ENCODE measurements at regions of chr1 and their contacts with region 1.

Region 1: GRCh38 chr1:33111970-33112369 is 31.0 kb downstream of the AZIN2 start:
- DNase-seq: peak; percentile 39
- ATAC-seq: no peak
- H3K4me3 ChIP-seq: no peak overlapping the region
- H3K4me3 Mint-ChIP-seq: no peak overlapping the region
- H3K27ac ChIP-seq: no peak overlapping the region
- H3K27ac Mint-ChIP-seq: no peak overlapping the region
- H3K4me1 ChIP-seq: no peaks in the 10 kb centered on the region
- H3K4me1 Mint-ChIP-seq: no peaks in the 10 kb centered on the region
- H3K27me3 ChIP-seq: no peaks in the 10 kb centered on the region
- H3K27me3 Mint-ChIP-seq: peaks cover 19% of the 10 kb centered on the region
- CTCF ChIP-seq: no peak

Region 2: DNA sequence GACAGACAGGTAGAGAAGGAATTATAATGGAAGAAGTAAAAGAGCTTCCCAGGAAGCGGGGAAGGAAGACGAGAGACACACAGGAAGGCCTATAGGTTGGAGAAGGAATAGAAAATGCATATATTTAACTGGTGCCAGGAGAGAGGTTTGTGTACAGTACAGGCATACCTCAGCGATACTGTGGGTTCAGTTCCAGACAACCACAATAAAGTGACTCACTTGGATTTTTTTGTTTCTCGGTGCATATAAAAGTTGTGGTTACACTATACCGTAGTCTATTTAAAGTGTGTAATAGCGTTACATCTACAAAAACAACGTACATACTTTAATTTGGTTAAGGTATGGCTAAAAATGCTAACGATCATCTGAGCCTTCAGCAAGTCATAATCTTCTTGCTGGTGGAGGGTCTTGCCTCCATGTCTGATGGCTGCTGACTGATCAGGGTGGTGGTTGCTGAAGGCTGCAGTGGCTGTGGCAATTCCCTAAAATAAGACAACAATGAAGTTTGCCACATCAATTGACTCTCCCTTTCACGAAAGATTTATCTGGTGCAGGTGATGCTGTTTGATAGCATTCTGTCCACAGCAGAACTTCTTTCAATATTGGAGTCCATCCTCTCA is 310.8 kb before region 1 on chr1:
- CTCF ChIA-PET with region 1: no interaction called
- POLR2A ChIA-PET with region 1: no interaction called
- intact Hi-C with region 1: no loop called
- DNase-seq: no peak
- ATAC-seq: no peak
- H3K4me3 ChIP-seq: no peak overlapping the region
- H3K4me3 Mint-ChIP-seq: peak overlapping the region; percentile 2
- H3K27ac ChIP-seq: no peak overlapping the region
- H3K27ac Mint-ChIP-seq: peak overlapping the region; percentile 46
- H3K4me1 ChIP-seq: peaks cover 16 to 31% of the 10 kb centered on the region in 2 donors
- H3K4me1 Mint-ChIP-seq: peaks cover 34% of the 10 kb centered on the region
- H3K27me3 ChIP-seq: no peaks in the 10 kb centered on the region
- H3K27me3 Mint-ChIP-seq: no peaks in the 10 kb centered on the region
- CTCF ChIP-seq: no peak

Region 3: DNA sequence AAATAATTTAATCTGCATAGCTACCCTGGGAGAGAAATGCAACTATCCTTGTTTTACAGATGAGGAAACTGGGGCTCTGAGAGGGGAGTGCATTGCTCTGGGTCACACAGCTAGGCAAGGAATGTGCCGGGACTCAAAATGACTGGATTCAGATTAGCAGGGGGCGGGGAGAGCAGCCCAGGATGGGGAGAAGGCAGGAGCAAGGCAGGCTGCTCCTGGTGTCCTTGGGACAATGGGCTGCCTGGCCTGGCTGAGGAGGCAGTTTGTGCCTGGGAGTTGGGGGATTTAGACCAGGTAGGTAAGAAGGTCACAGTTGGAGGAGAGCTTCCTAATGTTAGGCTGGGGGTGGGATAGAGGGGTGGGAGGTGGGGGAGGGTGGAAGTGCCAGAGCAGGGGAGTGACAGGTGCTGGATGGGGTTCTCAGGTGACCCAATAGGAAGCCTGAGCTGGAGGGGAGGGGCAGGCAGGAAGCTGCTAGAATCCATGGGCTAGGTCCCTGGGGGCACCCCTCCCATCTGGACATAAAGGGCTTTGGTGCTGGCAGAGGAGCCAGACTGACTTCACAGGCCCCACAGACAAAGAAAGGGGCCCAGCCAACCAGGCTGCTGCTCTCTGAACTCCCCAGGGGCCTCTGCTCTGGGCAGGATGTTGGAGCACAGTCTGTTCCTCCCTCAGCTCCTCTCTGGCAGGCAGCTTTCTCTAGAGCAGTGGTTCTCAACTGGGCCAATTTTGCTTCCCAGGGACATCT is 40.9 kb after region 1 on chr1:
- CTCF ChIA-PET with region 1: no interaction called
- POLR2A ChIA-PET with region 1: no interaction called
- intact Hi-C with region 1: no loop called
- DNase-seq: no peak
- ATAC-seq: no peak
- H3K4me3 ChIP-seq: no peak overlapping the region
- H3K4me3 Mint-ChIP-seq: no peak overlapping the region
- H3K27ac ChIP-seq: no peak overlapping the region
- H3K27ac Mint-ChIP-seq: no peak overlapping the region
- H3K4me1 ChIP-seq: peaks cover 0 to 12% of the 10 kb centered on the region in 2 donors
- H3K4me1 Mint-ChIP-seq: peaks cover 7% of the 10 kb centered on the region
- H3K27me3 ChIP-seq: no peaks in the 10 kb centered on the region
- H3K27me3 Mint-ChIP-seq: no peaks in the 10 kb centered on the region
- CTCF ChIP-seq: no peak

Region 4: DNA sequence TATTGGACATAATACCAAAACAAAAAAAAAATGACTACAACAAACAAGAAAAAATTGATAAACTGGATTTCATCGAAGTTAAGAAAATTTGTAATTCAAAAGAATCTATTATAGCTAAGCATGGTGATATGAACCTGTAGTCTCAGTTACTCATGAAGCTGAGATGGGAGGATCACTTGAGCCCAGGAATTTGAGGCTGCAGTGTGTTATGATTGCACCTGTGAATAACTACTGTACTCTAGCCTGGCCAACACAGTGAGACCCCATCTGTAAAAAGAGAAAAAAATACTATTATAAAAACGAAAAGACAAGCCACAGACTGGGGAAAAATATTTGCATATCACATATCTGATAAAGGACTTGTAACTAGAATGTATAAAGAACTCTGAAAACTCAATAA is 94.4 kb after region 1 on chr1:
- CTCF ChIA-PET with region 1: no interaction called
- POLR2A ChIA-PET with region 1: no interaction called
- intact Hi-C with region 1: no loop called
- DNase-seq: no peak
- ATAC-seq: no peak
- H3K4me3 ChIP-seq: no peak overlapping the region
- H3K4me3 Mint-ChIP-seq: no peak overlapping the region
- H3K27ac ChIP-seq: no peak overlapping the region
- H3K27ac Mint-ChIP-seq: no peak overlapping the region
- H3K4me1 ChIP-seq: no peaks in the 10 kb centered on the region
- H3K4me1 Mint-ChIP-seq: no peaks in the 10 kb centered on the region
- H3K27me3 ChIP-seq: no peaks in the 10 kb centered on the region
- H3K27me3 Mint-ChIP-seq: peaks cover 34% of the 10 kb centered on the region
- CTCF ChIP-seq: no peak

Region 5: GRCh38 chr1:33367485-33368405 is 255.8 kb after region 1 on chr1:
- CTCF ChIA-PET with region 1: interaction called, 3 read pairs
- POLR2A ChIA-PET with region 1: no interaction called
- intact Hi-C with region 1: loop called (anchors 1 kb)
- DNase-seq: peak; percentile 85
- ATAC-seq: peak; percentile 94
- H3K4me3 ChIP-seq: no peak overlapping the region
- H3K4me3 Mint-ChIP-seq: no peak overlapping the region
- H3K27ac ChIP-seq: no peak overlapping the region
- H3K27ac Mint-ChIP-seq: no peak overlapping the region
- H3K4me1 ChIP-seq: peaks cover 4 to 5% of the 10 kb centered on the region in 2 donors
- H3K4me1 Mint-ChIP-seq: no peaks in the 10 kb centered on the region
- H3K27me3 ChIP-seq: peaks cover 0 to 10% (median 3%) of the 10 kb centered on the region in 4 experiments
- H3K27me3 Mint-ChIP-seq: peaks cover 18% of the 10 kb centered on the region
- CTCF ChIP-seq: peak; percentile 96